MCF 10A (cell line): ENCODE measurements at regions of chr20 and their contacts with region 1.

Region 1: GRCh38 chr20:4038047-4038459 is 22.7 kb upstream of the RNF24 start:
- DNase-seq: peak; percentile 70
- H3K4me3 Mint-ChIP-seq: peak overlapping the region; percentile 44
- H3K27ac Mint-ChIP-seq: peak overlapping the region; percentile 57
- H3K4me1 Mint-ChIP-seq: peaks cover 37% of the 10 kb centered on the region
- H3K27me3 Mint-ChIP-seq: no peaks in the 10 kb centered on the region
- CTCF ChIP-seq: no peak

Region 2: DNA sequence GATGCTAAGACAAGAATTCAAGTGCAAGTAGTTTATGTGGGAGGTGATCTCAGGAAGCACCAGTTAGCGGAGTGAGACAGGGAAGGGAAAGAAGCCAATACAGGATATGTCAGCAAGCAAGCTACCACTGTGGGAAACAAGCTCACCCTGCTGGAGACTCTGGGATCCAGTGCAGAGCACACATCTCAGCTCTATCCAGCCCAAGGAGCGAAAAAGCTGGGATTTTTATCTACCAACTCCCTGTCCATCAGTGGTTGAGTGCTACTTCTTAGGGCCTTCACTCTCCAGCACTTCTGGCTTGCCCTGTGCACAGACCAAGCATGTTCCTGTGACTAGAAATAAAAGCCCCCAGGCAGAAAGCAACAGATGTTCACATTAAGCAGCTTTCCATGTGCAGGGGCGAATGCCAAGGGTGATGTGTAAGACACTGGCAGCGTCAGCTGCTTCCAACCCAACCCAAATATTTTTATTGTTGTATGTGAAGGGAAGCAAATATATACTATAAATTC is 11.9 kb before region 1 on chr20:
- CTCF ChIA-PET with region 1: interaction called, 7 read pairs
- POLR2A ChIA-PET with region 1: interaction called, 15 read pairs
- intact Hi-C with region 1: no loop called
- DNase-seq: peak; percentile 79
- H3K4me3 Mint-ChIP-seq: no peak overlapping the region
- H3K27ac Mint-ChIP-seq: peak overlapping the region; percentile 17
- H3K4me1 Mint-ChIP-seq: peaks cover 32% of the 10 kb centered on the region
- H3K27me3 Mint-ChIP-seq: no peaks in the 10 kb centered on the region
- CTCF ChIP-seq: peak; percentile 11

Region 3: DNA sequence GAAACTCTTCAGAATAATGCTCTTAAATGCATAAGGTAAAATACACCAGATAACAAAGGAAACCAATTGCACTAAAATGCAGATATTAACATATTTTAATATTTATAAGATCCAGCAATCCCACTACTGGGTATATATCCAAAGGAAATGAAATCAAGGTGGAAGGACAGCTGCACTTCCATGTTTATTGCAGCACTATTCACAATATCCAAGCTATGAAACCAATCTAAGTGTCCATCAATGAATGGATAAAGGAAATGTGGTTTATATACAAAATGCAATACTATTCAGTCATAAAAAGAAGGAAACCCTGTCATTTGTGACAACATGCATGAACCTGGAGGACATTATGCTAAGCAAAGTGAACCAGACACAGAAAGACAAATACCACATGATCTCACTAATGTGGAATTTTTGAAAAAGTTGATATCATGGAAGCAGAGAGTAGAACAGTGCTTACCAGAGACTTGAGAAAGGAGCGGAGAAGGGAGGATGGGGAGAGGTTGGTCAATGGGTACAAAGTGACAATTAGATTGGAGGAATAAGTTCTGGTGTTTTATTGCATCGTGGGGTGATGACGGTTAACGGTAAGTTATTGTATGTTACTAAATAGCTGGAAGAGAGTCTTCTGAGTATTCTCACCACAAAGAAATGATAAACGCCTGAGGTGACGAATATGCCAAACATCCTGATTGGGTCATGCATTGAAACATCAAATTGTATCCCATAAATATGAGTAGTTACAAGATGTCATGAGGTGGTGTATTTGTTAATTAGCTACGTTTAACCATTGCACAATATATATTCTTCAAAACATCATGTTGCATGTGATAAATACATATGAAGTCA is 15.2 kb after region 1 on chr20:
- CTCF ChIA-PET with region 1: interaction called, 7 read pairs
- POLR2A ChIA-PET with region 1: interaction called, 16 read pairs
- intact Hi-C with region 1: no loop called
- DNase-seq: peak; percentile 69
- H3K4me3 Mint-ChIP-seq: no peak overlapping the region
- H3K27ac Mint-ChIP-seq: no peak overlapping the region
- H3K4me1 Mint-ChIP-seq: peaks cover 18% of the 10 kb centered on the region
- H3K27me3 Mint-ChIP-seq: no peaks in the 10 kb centered on the region
- CTCF ChIP-seq: no peak

Region 4: DNA sequence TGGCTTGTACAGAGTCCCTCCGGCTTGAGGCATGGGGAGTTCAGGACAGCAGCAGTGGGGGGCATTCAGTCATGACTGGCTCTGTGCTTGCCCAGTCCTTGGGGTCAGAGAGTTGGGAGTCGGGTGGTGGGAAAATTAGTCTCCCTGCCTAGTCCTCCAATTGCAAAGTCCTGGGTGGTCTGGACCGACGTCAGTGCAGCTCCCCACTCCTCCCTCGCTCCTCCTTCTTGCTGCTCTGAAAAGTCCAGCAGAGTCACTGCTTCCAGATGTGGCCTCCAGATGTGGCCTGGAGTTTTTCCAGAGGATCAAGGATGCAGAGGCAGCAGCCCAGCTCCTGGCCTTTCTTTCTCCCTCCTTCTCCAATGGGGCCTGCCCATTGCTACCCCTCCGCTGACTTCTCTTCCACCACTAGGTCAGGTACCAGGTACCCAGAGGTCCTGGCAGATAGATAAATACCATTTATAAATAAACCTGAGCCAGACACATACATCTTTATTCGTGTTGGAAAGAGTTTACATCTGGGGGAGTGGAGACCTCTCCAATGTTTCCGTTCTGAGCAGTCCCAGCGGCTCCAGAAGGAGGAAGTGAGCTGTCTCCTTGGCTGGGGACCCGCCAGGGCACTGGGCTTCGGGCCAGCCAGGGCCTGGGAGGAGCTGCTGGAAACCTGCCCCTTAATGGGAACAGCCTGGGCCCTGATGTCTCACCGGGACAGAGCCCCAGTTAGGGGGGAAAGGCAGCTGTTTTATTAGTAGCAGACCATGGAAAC is 26.3 kb after region 1 on chr20:
- CTCF ChIA-PET with region 1: interaction called, 37 read pairs
- POLR2A ChIA-PET with region 1: interaction called, 46 read pairs
- intact Hi-C with region 1: no loop called
- DNase-seq: peak; percentile 95
- H3K4me3 Mint-ChIP-seq: peak overlapping the region; percentile 40
- H3K27ac Mint-ChIP-seq: peak overlapping the region; percentile 90
- H3K4me1 Mint-ChIP-seq: peaks cover 73% of the 10 kb centered on the region
- H3K27me3 Mint-ChIP-seq: no peaks in the 10 kb centered on the region
- CTCF ChIP-seq: no peak

Region 5: GRCh38 chr20:4069751-4070150 is 31.7 kb after region 1 on chr20:
- CTCF ChIA-PET with region 1: interaction called, 37 read pairs
- POLR2A ChIA-PET with region 1: interaction called, 46 read pairs
- intact Hi-C with region 1: no loop called
- DNase-seq: peak; percentile 53
- H3K4me3 Mint-ChIP-seq: no peak overlapping the region
- H3K27ac Mint-ChIP-seq: no peak overlapping the region
- H3K4me1 Mint-ChIP-seq: peaks cover 55% of the 10 kb centered on the region
- H3K27me3 Mint-ChIP-seq: no peaks in the 10 kb centered on the region
- CTCF ChIP-seq: no peak

Region 6: GRCh38 chr20:4082406-4083097 is 44.5 kb after region 1 on chr20:
- CTCF ChIA-PET with region 1: interaction called, 18 read pairs
- POLR2A ChIA-PET with region 1: interaction called, 13 read pairs
- intact Hi-C with region 1: no loop called
- DNase-seq: no peak
- H3K4me3 Mint-ChIP-seq: no peak overlapping the region
- H3K27ac Mint-ChIP-seq: no peak overlapping the region
- H3K4me1 Mint-ChIP-seq: peaks cover 22% of the 10 kb centered on the region
- H3K27me3 Mint-ChIP-seq: no peaks in the 10 kb centered on the region
- CTCF ChIP-seq: no peak